ENCODE measurements at regions of chr1 and their contacts with region 1.

Region 1: GRCh38 chr1:21200767-21201166 is 24.1 kb upstream of the EIF4G3 start:
- DNase-seq: no peak
- H3K4me3 ChIP-seq: no peak overlapping the region
- H3K27ac ChIP-seq: no peak overlapping the region
- H3K4me1 ChIP-seq: no peaks in the 10 kb centered on the region
- H3K27me3 ChIP-seq: no peaks in the 10 kb centered on the region
- CTCF ChIP-seq: no peak

Region 2: GRCh38 chr1:20981915-20982314 is 218.9 kb before region 1 on chr1:
- intact Hi-C with region 1: loop called (anchors 2 kb)
- DNase-seq: no peak
- H3K4me3 ChIP-seq: no peak overlapping the region
- H3K27ac ChIP-seq: no peak overlapping the region
- H3K4me1 ChIP-seq: no peaks in the 10 kb centered on the region
- H3K27me3 ChIP-seq: no peaks in the 10 kb centered on the region
- CTCF ChIP-seq: peak; percentile 24 to 51 (median 27)

Region 3: GRCh38 chr1:21550097-21550496 is 349.3 kb after region 1 on chr1:
- intact Hi-C with region 1: no loop called
- DNase-seq: no peak
- H3K4me3 ChIP-seq: no peak overlapping the region
- H3K27ac ChIP-seq: no peak overlapping the region
- H3K4me1 ChIP-seq: no peaks in the 10 kb centered on the region
- H3K27me3 ChIP-seq: no peaks in the 10 kb centered on the region
- CTCF ChIP-seq: no peak